IMR-90 (cell line): ENCODE measurements at regions of chr6 and their contacts with region 1.

Region 1: DNA sequence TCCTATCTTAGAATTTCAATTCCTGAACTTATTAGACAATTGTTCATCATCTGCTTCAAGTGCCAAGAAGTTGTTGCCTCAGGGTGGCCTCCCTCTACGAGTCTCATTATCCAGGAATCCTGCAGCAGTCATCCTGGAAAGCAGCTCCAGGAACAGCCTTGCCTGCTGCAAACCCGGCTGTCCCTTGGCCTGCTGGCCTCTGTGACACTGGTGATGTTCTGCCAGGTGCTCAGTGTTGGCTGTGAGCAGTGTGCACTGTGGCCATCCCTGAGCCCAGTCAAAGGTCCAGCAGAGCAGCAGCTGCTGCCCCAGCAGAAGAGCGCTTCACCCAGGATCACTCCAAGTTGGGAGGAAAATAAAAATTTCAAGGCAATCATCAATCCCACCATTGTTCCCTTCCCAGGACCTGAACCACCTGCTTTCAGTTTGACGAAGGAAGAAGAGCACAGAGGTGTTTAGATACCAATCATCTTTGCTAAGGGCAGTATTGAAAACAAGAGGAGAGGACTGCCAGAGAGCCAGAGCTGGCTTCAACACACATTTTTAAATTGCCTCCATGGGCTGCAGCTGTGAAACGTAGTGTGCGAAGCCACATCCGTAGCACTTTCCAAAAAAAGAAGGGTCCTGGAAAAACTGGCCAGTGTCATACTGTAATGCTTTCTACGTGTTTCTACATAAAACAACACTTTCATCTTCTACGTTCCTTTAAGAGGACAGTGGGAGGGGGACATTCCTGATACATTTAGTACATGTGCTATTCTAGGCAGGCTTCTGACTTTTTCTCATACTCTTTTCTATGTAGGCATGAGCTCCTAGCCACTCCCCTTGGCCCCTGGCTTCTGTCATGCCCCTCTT is 7.2 kb upstream of the FAM50B start:
- DNase-seq: peak; percentile 80
- ATAC-seq: peak; percentile 66
- H3K4me3 ChIP-seq: no peak overlapping the region
- H3K27ac ChIP-seq: peak overlapping the region; percentile 61
- H3K4me1 ChIP-seq: peaks cover 22% of the 10 kb centered on the region
- H3K27me3 ChIP-seq: no peaks in the 10 kb centered on the region
- CTCF ChIP-seq: no peak
- POLR2A ChIP-seq: no peak
- RAD21 ChIP-seq: peak; percentile 16; the same call in 1 of the 2 replicates

Region 2: DNA sequence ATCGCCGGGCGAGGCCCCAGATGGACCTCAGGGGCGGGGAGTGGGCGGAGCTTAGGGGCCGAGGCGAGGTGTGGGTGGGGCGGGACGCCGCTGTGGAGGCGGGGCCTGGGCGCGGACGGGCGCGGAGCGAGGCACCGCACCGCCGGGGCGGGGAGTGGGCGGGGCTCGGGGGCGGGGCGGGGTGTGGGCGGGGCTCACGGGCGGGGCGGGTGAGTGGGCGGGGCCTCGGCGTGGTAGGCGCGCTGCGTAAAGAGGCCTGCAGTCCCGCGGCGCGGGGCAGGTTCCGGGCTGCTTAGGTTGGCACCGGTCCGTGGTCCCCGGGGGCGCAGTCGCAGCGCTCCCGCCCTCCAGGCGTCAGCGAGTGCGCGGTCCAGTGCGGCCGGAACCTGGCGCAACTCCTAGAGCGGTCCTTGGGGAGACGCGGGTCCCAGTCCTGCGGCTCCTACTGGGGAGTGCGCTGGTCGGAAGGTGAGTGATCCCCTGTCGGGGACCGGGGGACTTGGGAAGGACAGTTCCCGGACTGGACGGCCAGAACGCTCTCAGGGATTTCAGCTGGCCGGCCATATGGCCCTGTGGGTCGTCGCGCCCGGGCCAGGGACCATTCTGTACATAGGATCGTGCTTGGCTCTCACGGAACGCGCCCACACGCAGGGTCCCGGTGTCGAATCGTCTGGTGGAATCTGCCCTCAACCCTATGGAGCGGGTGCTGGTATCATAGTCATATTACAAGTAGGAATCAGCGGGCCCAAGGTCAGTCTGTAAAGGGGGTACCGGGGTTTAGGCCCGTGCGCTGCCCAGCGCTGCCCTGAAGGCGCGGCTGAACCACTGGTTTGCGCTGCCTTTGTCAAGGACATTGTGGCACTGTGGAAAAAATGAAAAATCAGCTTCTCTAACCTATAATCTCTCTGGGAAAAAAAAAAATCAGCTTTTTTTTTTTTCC is 842.0 kb before region 1 on chr6 and contains the start of gene NQO2:
- CTCF ChIA-PET with region 1: no interaction called
- POLR2A ChIA-PET with region 1: no interaction called
- dilution Hi-C with region 1: no loop called
- in situ Hi-C with region 1: no loop called
- intact Hi-C with region 1: no loop called
- DNase-seq: peak; percentile 73
- ATAC-seq: peak; percentile 97
- H3K4me3 ChIP-seq: peak within 1 kb of the TSS; percentile 78
- H3K27ac ChIP-seq: peak within 1 kb of the TSS; percentile 58
- H3K4me1 ChIP-seq: peaks cover 5% of the 10 kb centered on the region
- H3K27me3 ChIP-seq: no peaks in the 10 kb centered on the region
- CTCF ChIP-seq: 0 out of 2 replicates have a peak, but pooled peaks have one; percentile 0
- POLR2A ChIP-seq: peak; percentile 82
- RAD21 ChIP-seq: no peak
- total RNA-seq, gene NQO2: 59.4 and 72.1 TPM in 2 replicates

Region 3: GRCh38 chr6:3500262-3501016 is 341.5 kb before region 1 on chr6:
- CTCF ChIA-PET with region 1: no interaction called
- POLR2A ChIA-PET with region 1: no interaction called
- dilution Hi-C with region 1: no loop called
- in situ Hi-C with region 1: no loop called
- intact Hi-C with region 1: no loop called
- DNase-seq: peak; percentile 71
- ATAC-seq: peak; percentile 69; the same call in 1 of the 2 replicates
- H3K4me3 ChIP-seq: no peak overlapping the region
- H3K27ac ChIP-seq: no peak overlapping the region
- H3K4me1 ChIP-seq: peaks cover 5% of the 10 kb centered on the region; the same call in 1 of the 2 replicates
- H3K27me3 ChIP-seq: peaks cover 42% of the 10 kb centered on the region
- CTCF ChIP-seq: no peak
- POLR2A ChIP-seq: no peak
- RAD21 ChIP-seq: no peak

Region 4: DNA sequence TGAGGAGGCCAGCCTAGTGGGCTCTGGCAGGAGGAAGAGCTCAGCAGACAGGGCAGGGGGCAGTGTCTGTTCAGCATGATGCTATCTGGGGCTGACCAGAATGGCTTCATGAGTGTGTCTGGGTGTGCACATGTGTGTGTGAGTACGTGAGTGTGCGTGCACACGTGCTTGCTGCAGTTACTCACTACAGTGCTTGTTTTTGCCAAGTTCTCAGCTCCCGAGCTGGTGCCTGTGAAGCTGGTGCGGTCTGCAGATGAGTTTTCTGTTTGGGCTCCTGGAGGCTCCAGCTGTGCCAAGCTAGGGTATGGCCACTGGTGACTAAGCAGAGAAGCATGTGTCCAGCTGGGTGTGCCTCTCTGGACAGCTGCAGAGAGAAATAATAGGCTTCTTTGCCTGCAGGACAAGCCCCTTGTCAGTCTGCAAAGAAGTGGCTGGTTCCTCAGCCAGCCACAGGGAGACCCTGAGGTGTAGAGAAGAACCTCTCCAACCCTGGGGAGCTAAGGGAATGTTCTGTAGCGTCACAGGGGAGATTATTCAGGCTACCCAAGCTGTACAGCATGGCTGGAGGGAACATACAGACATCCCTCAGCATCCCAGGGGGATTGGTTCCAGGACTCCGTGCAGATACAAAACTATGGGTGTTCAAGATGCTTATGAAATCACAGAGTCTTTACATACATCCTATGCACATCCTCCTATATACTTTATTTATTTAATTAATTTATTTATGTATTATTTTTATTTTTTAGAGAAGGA is 33.0 kb before region 1 on chr6:
- CTCF ChIA-PET with region 1: no interaction called
- POLR2A ChIA-PET with region 1: no interaction called
- dilution Hi-C with region 1: no loop called
- in situ Hi-C with region 1: no loop called
- intact Hi-C with region 1: loop called (anchors 5 kb)
- DNase-seq: peak; percentile 90
- ATAC-seq: peak; percentile 82
- H3K4me3 ChIP-seq: no peak overlapping the region
- H3K27ac ChIP-seq: peak overlapping the region; percentile 63
- H3K4me1 ChIP-seq: peaks cover 27% of the 10 kb centered on the region
- H3K27me3 ChIP-seq: no peaks in the 10 kb centered on the region
- CTCF ChIP-seq: peak; percentile 21; the same call in 1 of the 2 replicates
- POLR2A ChIP-seq: no peak
- RAD21 ChIP-seq: no peak

Region 5: DNA sequence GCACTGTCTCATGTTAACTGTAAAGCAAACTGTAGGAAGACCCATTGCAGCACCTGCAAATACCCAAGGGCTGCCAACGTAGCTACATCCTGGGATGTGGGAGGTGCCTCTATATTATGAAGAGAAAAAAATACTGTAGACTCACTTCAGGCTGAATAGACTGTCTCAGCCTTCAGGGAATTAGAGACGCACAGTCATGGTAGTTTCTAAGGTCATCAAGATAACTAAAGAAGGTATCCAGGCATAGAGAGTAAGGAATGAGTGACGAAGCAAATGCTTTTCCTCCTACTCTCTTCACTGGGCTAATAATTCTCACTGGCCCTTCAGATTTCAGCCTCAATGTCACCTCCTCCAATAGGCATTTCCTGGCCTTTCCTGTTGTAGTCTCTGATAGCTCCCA is 415.0 kb after region 1 on chr6:
- CTCF ChIA-PET with region 1: no interaction called
- POLR2A ChIA-PET with region 1: no interaction called
- dilution Hi-C with region 1: no loop called
- in situ Hi-C with region 1: no loop called
- intact Hi-C with region 1: no loop called
- DNase-seq: peak; percentile 34
- ATAC-seq: no peak
- H3K4me3 ChIP-seq: no peak overlapping the region
- H3K27ac ChIP-seq: no peak overlapping the region
- H3K4me1 ChIP-seq: peaks cover 13% of the 10 kb centered on the region
- H3K27me3 ChIP-seq: no peaks in the 10 kb centered on the region
- CTCF ChIP-seq: no peak
- POLR2A ChIP-seq: no peak
- RAD21 ChIP-seq: no peak